CD8-positive, alpha-beta T cell (primary cell): ENCODE measurements at regions of chrX and their contacts with region 1.

Region 1: DNA sequence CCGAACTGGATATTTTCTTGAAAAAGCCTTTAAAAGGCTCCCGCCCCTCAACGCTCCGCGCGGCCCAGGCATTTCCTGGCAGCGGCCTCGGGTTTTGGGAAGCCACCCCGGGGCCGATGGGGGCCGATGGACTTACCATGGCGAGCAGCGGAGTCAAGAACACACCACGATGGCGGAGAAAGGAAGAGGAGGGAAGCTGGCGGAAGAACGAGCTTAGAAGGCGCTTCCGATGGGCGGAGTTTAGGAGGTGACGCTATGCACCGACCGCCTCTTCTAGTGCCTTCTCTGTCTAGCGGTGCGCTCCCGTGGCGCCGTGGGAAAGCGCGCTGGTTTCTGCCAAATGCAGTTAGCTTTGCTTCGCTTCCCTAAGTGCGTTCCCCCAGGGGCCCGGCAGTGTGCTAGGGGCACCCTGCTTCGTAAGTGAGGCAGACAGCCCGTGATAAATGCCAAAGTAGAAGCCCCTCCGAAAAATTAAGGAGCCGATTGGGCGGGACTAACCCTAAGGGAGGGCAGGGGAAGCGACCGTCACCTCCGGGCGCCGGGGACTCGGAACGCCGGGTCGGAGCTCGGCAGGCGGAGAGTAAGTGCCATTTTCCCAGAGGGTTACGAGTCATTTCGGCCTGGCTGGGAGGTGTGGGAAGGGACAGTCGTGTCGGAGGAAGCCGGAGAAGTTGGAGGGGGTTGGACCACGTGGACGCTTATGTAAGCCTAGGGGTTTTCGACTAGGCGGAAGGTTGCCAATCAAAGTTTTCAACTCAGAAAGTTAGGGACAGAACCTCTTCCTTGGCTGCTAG is at the start of gene RPL39:
- DNase-seq: peak; percentile 57 to 93 (median 78)
- ATAC-seq: peak; percentile 90
- H3K4me3 ChIP-seq: peak within 1 kb of the TSS; percentile 84 to 97
- H3K4me3 Mint-ChIP-seq: peak within 1 kb of the TSS; percentile 97
- H3K27ac ChIP-seq: peak within 1 kb of the TSS; percentile 88 to 98
- H3K27ac Mint-ChIP-seq: peak within 1 kb of the TSS; percentile 98
- H3K4me1 ChIP-seq: peaks cover 31% of the 10 kb centered on the region
- H3K4me1 Mint-ChIP-seq: peaks cover 44% of the 10 kb centered on the region
- H3K27me3 ChIP-seq: no peaks in the 10 kb centered on the region
- H3K27me3 Mint-ChIP-seq: no peaks in the 10 kb centered on the region
- CTCF ChIP-seq: no peak
- total RNA-seq, gene RPL39: 4,125 to 4,338 TPM

Region 2: DNA sequence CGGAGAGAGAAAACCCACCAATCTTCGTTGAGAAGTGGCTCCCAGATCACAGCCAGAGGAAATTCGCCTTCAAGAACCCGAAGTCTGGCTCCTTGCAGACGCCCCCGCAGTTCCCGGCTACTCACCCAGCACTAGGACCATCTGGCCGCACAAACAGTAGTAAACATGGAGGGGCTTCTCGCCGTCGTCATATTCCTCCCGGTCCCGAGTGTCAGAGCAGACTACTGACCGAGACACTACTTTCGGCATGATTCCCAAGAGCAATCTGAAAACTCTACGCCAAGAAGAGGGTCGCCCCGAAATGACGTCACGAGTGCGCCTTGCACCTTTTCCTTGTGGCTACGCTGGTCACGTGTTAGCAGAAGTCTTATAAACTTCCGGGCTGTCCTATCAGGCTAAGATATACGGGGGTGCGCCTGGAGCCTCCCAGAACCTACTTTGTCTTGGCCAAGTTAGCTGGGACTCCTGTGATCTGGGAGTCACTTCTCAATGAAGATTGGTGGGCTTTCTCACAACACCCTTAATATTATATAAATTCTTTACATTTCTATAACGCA is 226.4 kb before region 1 on chrX and contains the start of gene STEEP1:
- CTCF ChIA-PET with region 1: no interaction called
- POLR2A ChIA-PET with region 1: no interaction called
- intact Hi-C with region 1: loop called in 1 of 2 experiments (anchors 5 kb)
- DNase-seq: peak; percentile 65 to 94 (median 87)
- ATAC-seq: peak; percentile 94
- H3K4me3 ChIP-seq: peak within 1 kb of the TSS; percentile 72 to 80
- H3K4me3 Mint-ChIP-seq: peak within 1 kb of the TSS; percentile 96
- H3K27ac ChIP-seq: peak within 1 kb of the TSS; percentile 77 to 78
- H3K27ac Mint-ChIP-seq: peak within 1 kb of the TSS; percentile 96
- H3K4me1 ChIP-seq: peaks cover 3% of the 10 kb centered on the region
- H3K4me1 Mint-ChIP-seq: peaks cover 22% of the 10 kb centered on the region
- H3K27me3 ChIP-seq: no peaks in the 10 kb centered on the region
- H3K27me3 Mint-ChIP-seq: no peaks in the 10 kb centered on the region
- CTCF ChIP-seq: no peak
- total RNA-seq, gene STEEP1: 33.6 to 34.5 TPM

Region 3: GRCh38 chrX:119880552-119881437 is 89.2 kb after region 1 on chrX:
- CTCF ChIA-PET with region 1: interaction called, 8 read pairs
- POLR2A ChIA-PET with region 1: interaction called, 3 read pairs
- intact Hi-C with region 1: loop called (anchors 2 kb)
- DNase-seq: peak in 5 of 9 experiments; percentile 19 to 73 (median 39)
- ATAC-seq: peak; percentile 84
- H3K4me3 ChIP-seq: no peak overlapping the region
- H3K4me3 Mint-ChIP-seq: no peak overlapping the region
- H3K27ac ChIP-seq: no peak overlapping the region
- H3K27ac Mint-ChIP-seq: peak overlapping the region; percentile 81
- H3K4me1 ChIP-seq: peaks cover 5% of the 10 kb centered on the region
- H3K4me1 Mint-ChIP-seq: peaks cover 26% of the 10 kb centered on the region
- H3K27me3 ChIP-seq: no peaks in the 10 kb centered on the region
- H3K27me3 Mint-ChIP-seq: no peaks in the 10 kb centered on the region
- CTCF ChIP-seq: peak; percentile 51

Region 4: DNA sequence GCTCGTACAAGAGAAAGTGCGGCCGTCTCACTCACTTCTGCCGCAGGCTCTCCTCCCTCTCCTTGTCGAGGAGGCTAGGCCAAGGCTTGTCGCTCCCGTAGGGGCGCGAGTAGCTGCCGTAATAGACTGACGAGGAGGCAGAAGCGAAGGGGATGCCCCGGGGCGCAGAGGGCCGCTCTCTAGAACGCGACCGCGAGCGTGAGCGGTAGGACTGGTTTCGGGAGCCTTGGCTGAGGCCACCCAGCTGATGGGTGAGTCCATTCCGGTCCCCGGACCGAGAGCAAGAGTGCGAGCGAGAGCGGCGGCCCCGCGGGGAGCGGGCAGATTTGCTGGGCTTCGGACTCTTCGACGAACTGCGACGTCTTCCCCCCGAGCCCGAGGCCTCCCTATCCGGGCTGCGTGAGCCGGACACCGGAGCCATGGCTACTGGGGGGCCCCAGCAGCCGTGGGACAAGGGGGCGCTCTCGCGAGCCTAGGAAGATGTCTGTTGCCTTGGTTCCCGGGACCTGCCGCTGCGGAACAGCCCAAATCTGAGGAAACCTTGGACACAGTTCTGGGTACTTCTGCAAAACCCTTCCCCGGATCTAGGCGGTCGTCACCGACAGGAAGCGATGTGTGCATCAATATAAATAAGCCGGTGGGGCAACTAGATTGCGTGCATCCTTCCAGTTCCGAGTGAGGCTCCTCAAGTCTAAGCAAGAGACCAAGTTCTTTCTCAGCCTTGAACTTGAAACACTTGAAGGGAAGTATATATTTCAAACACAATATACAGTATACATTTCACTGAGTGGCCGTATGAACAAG is 151.8 kb after region 1 on chrX and contains the start of gene NKAP:
- CTCF ChIA-PET with region 1: no interaction called
- POLR2A ChIA-PET with region 1: no interaction called
- intact Hi-C with region 1: loop called (anchors 2 to 5 kb)
- DNase-seq: peak; percentile 59 to 90 (median 78)
- ATAC-seq: peak; percentile 82
- H3K4me3 ChIP-seq: peak within 1 kb of the TSS; percentile 94
- H3K4me3 Mint-ChIP-seq: peak within 1 kb of the TSS; percentile 97
- H3K27ac ChIP-seq: peak within 1 kb of the TSS; percentile 91 to 93
- H3K27ac Mint-ChIP-seq: peak within 1 kb of the TSS; percentile 97
- H3K4me1 ChIP-seq: peaks cover 18% of the 10 kb centered on the region
- H3K4me1 Mint-ChIP-seq: peaks cover 24% of the 10 kb centered on the region
- H3K27me3 ChIP-seq: no peaks in the 10 kb centered on the region
- H3K27me3 Mint-ChIP-seq: peaks cover under 1% of the 10 kb centered on the region
- CTCF ChIP-seq: no peak
- total RNA-seq, gene NKAP: 17.4 to 20.1 TPM

Region 5: GRCh38 chrX:121322159-121322558 is 1530.5 kb after region 1 on chrX:
- CTCF ChIA-PET with region 1: no interaction called
- POLR2A ChIA-PET with region 1: no interaction called
- intact Hi-C with region 1: no loop called
- DNase-seq: no peak
- ATAC-seq: no peak
- H3K4me3 ChIP-seq: no peak overlapping the region
- H3K4me3 Mint-ChIP-seq: no peak overlapping the region
- H3K27ac ChIP-seq: no peak overlapping the region
- H3K27ac Mint-ChIP-seq: no peak overlapping the region
- H3K4me1 ChIP-seq: no peaks in the 10 kb centered on the region
- H3K4me1 Mint-ChIP-seq: no peaks in the 10 kb centered on the region
- H3K27me3 ChIP-seq: no peaks in the 10 kb centered on the region
- H3K27me3 Mint-ChIP-seq: no peaks in the 10 kb centered on the region
- CTCF ChIP-seq: no peak